Psoas muscle (tissue), 8 donors: ENCODE measurements at regions of chr1 and their contacts with region 1.

Region 1: GRCh38 chr1:85692730-85693314 is 15.4 kb downstream of the ZNHIT6 start:
- DNase-seq: no peak
- ATAC-seq: peak in 1 of 4 donors; percentile 58
- H3K4me3 ChIP-seq: no peak overlapping the region
- H3K27ac ChIP-seq: no peak overlapping the region
- H3K4me1 ChIP-seq: peaks cover 9% of the 10 kb centered on the region
- H3K27me3 ChIP-seq: no peaks in the 10 kb centered on the region
- CTCF ChIP-seq: peak; percentile 57

Region 2: DNA sequence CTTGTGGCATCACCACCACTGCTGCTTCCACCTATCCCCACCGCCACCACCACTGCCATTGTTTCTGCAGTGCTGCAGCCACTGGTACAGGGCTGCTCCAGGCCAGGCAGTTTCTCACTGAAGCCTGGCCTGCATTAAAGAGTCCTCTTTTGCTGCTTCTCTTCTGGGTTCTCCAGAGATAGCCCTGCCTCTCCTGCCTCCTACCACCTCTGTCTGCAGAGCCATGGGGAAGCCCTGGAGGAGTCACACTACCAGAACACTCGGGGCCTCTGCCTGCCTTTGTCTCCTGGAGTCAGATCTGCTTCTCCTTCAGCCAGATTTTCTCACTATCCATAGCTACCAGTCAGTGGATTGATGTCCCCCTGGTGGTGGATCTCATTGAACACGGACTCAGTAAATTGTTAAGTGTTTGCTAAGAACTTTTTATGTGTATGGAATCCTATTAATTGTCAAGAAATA is 190.2 kb before region 1 on chr1:
- intact Hi-C with region 1: loop called in 1 of 2 experiments (anchors 10 kb)
- DNase-seq: peak in 1 of 2 donors; percentile 13
- ATAC-seq: peak; percentile 60 to 88 (median 78)
- H3K4me3 ChIP-seq: no peak overlapping the region
- H3K27ac ChIP-seq: no peak overlapping the region
- H3K4me1 ChIP-seq: no peaks in the 10 kb centered on the region
- H3K27me3 ChIP-seq: no peaks in the 10 kb centered on the region
- CTCF ChIP-seq: peak; percentile 53

Region 3: DNA sequence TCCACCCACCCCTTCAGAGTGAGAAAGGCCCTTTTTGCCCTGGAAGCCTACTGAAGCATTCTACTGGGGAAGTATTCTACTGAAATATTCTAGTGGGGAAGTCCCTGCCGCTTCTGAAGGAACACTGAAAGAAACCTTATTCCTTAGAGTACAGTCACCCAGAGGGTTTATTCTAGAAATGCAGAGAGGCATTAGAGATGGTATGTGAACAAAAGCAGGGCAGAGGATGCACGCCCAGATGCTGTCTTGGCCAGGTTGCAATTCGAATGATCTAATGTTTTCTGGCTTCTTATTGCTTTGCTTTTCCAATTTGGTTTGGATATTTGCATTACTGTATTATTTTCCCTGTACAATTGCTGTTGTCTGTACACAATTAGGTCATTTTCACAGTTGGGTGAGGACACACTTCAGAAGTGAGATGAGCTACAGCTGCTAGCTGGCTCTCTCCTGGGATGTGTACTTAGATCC is 75.2 kb before region 1 on chr1:
- intact Hi-C with region 1: loop called in 1 of 2 experiments (anchors 5 kb)
- DNase-seq: no peak
- ATAC-seq: no peak
- H3K4me3 ChIP-seq: no peak overlapping the region
- H3K27ac ChIP-seq: no peak overlapping the region
- H3K4me1 ChIP-seq: peaks cover 4% of the 10 kb centered on the region
- H3K27me3 ChIP-seq: no peaks in the 10 kb centered on the region
- CTCF ChIP-seq: no peak

Region 4: GRCh38 chr1:85818371-85818770 is 125.5 kb after region 1 on chr1:
- intact Hi-C with region 1: no loop called
- DNase-seq: no peak
- ATAC-seq: no peak
- H3K4me3 ChIP-seq: no peak overlapping the region
- H3K27ac ChIP-seq: no peak overlapping the region
- H3K4me1 ChIP-seq: peaks cover 4% of the 10 kb centered on the region
- H3K27me3 ChIP-seq: no peaks in the 10 kb centered on the region
- CTCF ChIP-seq: no peak